ENCODE measurements at regions of chr14 and their contacts with region 1.

Region 1: GRCh38 chr14:88535149-88535548 is 19.7 kb downstream of the PTPN21 start:
- DNase-seq: peak; percentile 72 to 79
- H3K4me3 ChIP-seq: no peak overlapping the region
- H3K4me3 Mint-ChIP-seq: no peak overlapping the region
- H3K27ac Mint-ChIP-seq: peak overlapping the region; percentile 13
- H3K4me1 ChIP-seq: peaks cover 34% of the 10 kb centered on the region
- H3K4me1 Mint-ChIP-seq: peaks cover 11% of the 10 kb centered on the region
- H3K27me3 ChIP-seq: no peaks in the 10 kb centered on the region
- H3K27me3 Mint-ChIP-seq: no peaks in the 10 kb centered on the region
- CTCF ChIP-seq: peak; percentile 34 to 45

Region 2: DNA sequence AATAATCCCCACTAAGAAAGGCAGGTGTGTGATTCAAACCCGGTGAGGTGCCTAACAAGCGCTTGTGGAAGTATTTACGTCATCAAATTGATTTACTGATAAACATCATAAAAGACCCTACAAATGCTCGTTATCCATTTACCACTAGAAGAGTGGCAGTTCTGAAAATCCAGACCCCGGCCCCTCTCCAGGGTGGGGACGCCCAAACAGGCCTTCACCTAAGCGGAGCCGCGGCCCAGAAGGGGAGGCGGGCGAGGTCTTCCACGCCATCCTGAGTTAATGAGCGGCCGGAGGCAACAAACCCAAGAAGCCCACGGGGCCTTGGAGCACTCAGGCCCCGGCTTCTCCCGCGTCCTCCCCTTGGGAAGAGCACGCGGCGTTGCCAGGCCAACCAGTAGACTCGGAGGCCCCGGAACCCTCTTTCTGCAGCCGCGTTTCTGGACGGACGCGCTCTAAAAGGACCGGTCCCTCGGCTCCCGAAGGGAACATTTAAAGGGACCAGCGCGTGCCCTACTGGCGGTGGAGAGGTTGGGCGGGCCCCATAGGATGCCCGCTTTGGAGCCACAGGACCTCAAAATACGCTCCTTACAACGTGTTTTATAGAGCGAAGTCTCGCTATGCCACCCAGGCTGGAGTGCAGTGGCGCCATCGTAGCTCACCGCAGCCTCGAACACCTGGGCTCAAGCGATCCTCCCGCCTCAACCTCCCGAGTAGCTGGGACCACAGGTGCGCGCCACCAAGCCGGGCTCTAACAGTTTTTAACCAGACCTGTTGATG is 16.1 kb after region 1 on chr14:
- CTCF ChIA-PET with region 1: interaction called, 4 read pairs
- POLR2A ChIA-PET with region 1: no interaction called
- intact Hi-C with region 1: loop called (anchors 2 kb)
- DNase-seq: peak; percentile 80 to 82
- H3K4me3 ChIP-seq: peak overlapping the region; percentile 48
- H3K4me3 Mint-ChIP-seq: peak overlapping the region; percentile 85
- H3K27ac Mint-ChIP-seq: no peak overlapping the region
- H3K4me1 ChIP-seq: peaks cover 43% of the 10 kb centered on the region
- H3K4me1 Mint-ChIP-seq: peaks cover 24% of the 10 kb centered on the region
- H3K27me3 ChIP-seq: no peaks in the 10 kb centered on the region
- H3K27me3 Mint-ChIP-seq: no peaks in the 10 kb centered on the region
- CTCF ChIP-seq: peak; percentile 13 to 28

Region 3: DNA sequence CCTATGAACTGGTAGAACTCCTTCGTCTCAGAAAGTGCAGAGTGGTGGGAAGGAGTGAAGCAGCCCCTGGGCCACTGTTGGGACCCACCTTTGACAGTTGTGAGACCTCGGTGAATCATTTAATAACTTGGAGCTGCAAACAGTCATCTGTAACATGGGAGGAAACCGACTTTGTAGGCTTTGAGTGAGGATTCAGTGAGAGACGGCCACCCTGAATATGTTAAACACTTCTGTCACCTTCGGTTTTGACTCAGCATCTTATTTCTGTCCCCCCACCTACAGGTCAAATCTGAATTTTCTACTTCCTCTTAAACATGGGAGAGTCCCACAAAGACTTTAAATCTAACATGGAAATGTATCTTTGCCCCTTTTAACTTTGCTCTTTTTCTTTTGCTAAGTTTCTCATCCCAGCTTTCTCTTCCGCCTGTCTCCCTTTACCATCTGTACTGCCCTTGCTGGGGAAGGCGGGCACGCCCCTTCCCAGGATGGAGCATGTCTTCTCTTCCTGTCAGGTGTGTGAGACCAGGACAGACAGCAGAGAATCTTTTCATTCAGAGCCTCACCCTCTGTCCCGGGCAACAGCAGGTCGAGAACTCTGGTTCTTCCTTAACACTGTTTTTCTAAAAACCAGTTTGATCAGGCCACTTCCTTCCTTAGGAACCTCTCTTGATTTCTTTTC is 64.8 kb after region 1 on chr14:
- CTCF ChIA-PET with region 1: no interaction called
- POLR2A ChIA-PET with region 1: no interaction called
- intact Hi-C with region 1: no loop called
- DNase-seq: no peak
- H3K4me3 ChIP-seq: no peak overlapping the region
- H3K4me3 Mint-ChIP-seq: no peak overlapping the region
- H3K27ac Mint-ChIP-seq: no peak overlapping the region
- H3K4me1 ChIP-seq: no peaks in the 10 kb centered on the region
- H3K4me1 Mint-ChIP-seq: peaks cover 11% of the 10 kb centered on the region
- H3K27me3 ChIP-seq: no peaks in the 10 kb centered on the region
- H3K27me3 Mint-ChIP-seq: no peaks in the 10 kb centered on the region
- CTCF ChIP-seq: no peak